Activated naive CD4-positive, alpha-beta T cell treated with anti-CD3 and anti-CD28 coated beads for 36 hours (primary cell): ENCODE measurements at regions of chr2 and their contacts with region 1.

Region 1: GRCh38 chr2:60550178-60550983 is 3.1 kb downstream of the BCL11A start:
- DNase-seq: peak; percentile 75
- H3K4me3 Mint-ChIP-seq: peak overlapping the region; percentile 83
- H3K27ac Mint-ChIP-seq: no peak overlapping the region
- H3K4me1 Mint-ChIP-seq: peaks cover 31% of the 10 kb centered on the region
- H3K27me3 Mint-ChIP-seq: peaks cover 66% of the 10 kb centered on the region

Region 2: GRCh38 chr2:58762176-58762781 is 1788.1 kb before region 1 on chr2:
- CTCF ChIA-PET with region 1: no interaction called
- intact Hi-C with region 1: loop called (anchors 10 kb)
- DNase-seq: peak; percentile 43
- H3K4me3 Mint-ChIP-seq: no peak overlapping the region
- H3K27ac Mint-ChIP-seq: no peak overlapping the region
- H3K4me1 Mint-ChIP-seq: no peaks in the 10 kb centered on the region
- H3K27me3 Mint-ChIP-seq: no peaks in the 10 kb centered on the region

Region 3: GRCh38 chr2:59301466-59302402 is 1248.6 kb before region 1 on chr2:
- CTCF ChIA-PET with region 1: interaction called, 5 read pairs
- intact Hi-C with region 1: loop called (anchors 1 kb)
- DNase-seq: peak; percentile 29
- H3K4me3 Mint-ChIP-seq: no peak overlapping the region
- H3K27ac Mint-ChIP-seq: no peak overlapping the region
- H3K4me1 Mint-ChIP-seq: no peaks in the 10 kb centered on the region
- H3K27me3 Mint-ChIP-seq: peaks cover 4% of the 10 kb centered on the region

Region 4: GRCh38 chr2:59888015-59888414 is 662.4 kb before region 1 on chr2:
- CTCF ChIA-PET with region 1: no interaction called
- intact Hi-C with region 1: loop called (anchors 5 kb)
- DNase-seq: peak; percentile 78
- H3K4me3 Mint-ChIP-seq: peak overlapping the region; percentile 31
- H3K27ac Mint-ChIP-seq: peak overlapping the region; percentile 6
- H3K4me1 Mint-ChIP-seq: peaks cover 50% of the 10 kb centered on the region
- H3K27me3 Mint-ChIP-seq: no peaks in the 10 kb centered on the region

Region 5: GRCh38 chr2:60446413-60447267 is 103.7 kb before region 1 on chr2:
- CTCF ChIA-PET with region 1: interaction called, 4 read pairs
- intact Hi-C with region 1: loop called (anchors 1 kb)
- DNase-seq: no peak
- H3K4me3 Mint-ChIP-seq: no peak overlapping the region
- H3K27ac Mint-ChIP-seq: no peak overlapping the region
- H3K4me1 Mint-ChIP-seq: peaks cover 8% of the 10 kb centered on the region
- H3K27me3 Mint-ChIP-seq: no peaks in the 10 kb centered on the region

Region 6: GRCh38 chr2:60976875-60977561 is 426.6 kb after region 1 on chr2:
- CTCF ChIA-PET with region 1: no interaction called
- intact Hi-C with region 1: loop called (anchors 10 kb)
- DNase-seq: peak; percentile 48
- H3K4me3 Mint-ChIP-seq: no peak overlapping the region
- H3K27ac Mint-ChIP-seq: peak overlapping the region; percentile 69
- H3K4me1 Mint-ChIP-seq: peaks cover 53% of the 10 kb centered on the region
- H3K27me3 Mint-ChIP-seq: no peaks in the 10 kb centered on the region

Region 7: GRCh38 chr2:61470965-61471904 is 920.9 kb after region 1 on chr2 and contains the start of gene USP34:
- CTCF ChIA-PET with region 1: no interaction called
- intact Hi-C with region 1: loop called (anchors 5 kb)
- DNase-seq: peak; percentile 94
- H3K4me3 Mint-ChIP-seq: peak within 1 kb of the TSS; percentile 98
- H3K27ac Mint-ChIP-seq: peak within 1 kb of the TSS; percentile 97
- H3K4me1 Mint-ChIP-seq: peaks cover 31% of the 10 kb centered on the region
- H3K27me3 Mint-ChIP-seq: no peaks in the 10 kb centered on the region
- total RNA-seq, gene USP34: 59.5 to 60.4 TPM